ENCODE measurements at regions of chr9 and their contacts with region 1.

Region 1: GRCh38 chr9:19999491-20000057 is 210.7 kb upstream of the SLC24A2 start:
- DNase-seq: no peak
- H3K4me3 ChIP-seq: no peak overlapping the region
- H3K27ac ChIP-seq: 0 out of 2 replicates have a peak overlapping the region, but pooled peaks have one; percentile 39
- H3K4me1 ChIP-seq: no peaks in the 10 kb centered on the region
- H3K27me3 ChIP-seq: no peaks in the 10 kb centered on the region
- CTCF ChIP-seq: no peak

Region 2: DNA sequence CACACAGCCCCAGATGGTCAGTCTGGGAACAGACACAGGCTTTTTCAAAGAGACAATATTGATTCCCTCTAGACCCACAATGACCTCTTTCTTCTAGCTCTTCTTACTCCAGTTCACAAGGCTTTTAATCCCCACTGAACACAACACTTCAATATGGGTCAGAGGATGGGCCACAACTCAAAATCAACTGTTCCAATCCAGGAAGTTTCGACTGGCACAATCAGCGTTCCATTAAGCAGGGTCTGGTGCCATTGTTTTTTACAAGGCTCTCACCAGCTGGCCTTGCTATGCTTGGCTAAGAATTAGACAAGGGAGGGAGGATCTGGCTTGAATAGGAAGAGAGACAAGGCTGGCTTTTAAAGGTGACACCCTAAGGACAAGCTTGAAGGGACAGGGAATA is 11.3 kb before region 1 on chr9:
- CTCF ChIA-PET with region 1: no interaction called
- POLR2A ChIA-PET with region 1: no interaction called
- intact Hi-C with region 1: no loop called
- DNase-seq: no peak
- H3K4me3 ChIP-seq: no peak overlapping the region
- H3K27ac ChIP-seq: no peak overlapping the region
- H3K4me1 ChIP-seq: no peaks in the 10 kb centered on the region
- H3K27me3 ChIP-seq: no peaks in the 10 kb centered on the region
- CTCF ChIP-seq: no peak

Region 3: DNA sequence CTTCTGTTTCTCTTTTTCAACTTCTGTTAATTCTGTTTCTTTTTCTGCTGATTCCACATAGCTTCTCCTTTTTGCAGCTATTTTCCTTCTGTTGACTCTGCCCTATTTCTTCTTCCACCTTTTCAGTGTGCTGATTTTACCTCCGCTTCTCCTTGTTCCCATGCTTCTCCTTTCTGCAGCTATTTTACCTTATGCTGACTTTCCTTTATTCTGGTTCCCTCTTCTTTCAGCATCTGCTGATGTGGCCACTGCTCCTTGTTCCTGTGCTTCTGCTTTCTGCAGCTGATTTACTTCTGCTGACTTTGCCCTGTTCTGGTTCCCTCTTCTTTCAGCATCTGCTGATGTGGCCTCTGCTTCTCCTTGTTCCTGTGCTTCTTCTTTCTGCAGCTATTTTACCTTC is 973.1 kb after region 1 on chr9:
- CTCF ChIA-PET with region 1: no interaction called
- POLR2A ChIA-PET with region 1: interaction called, 10 read pairs
- intact Hi-C with region 1: no loop called
- DNase-seq: no peak
- H3K4me3 ChIP-seq: no peak overlapping the region
- H3K27ac ChIP-seq: no peak overlapping the region
- H3K4me1 ChIP-seq: no peaks in the 10 kb centered on the region
- H3K27me3 ChIP-seq: no peaks in the 10 kb centered on the region
- CTCF ChIP-seq: no peak

Measured in PC-9 (cell line).